GM13977 (cell line): ENCODE measurements at regions of chr3 and their contacts with region 1.

Region 1: DNA sequence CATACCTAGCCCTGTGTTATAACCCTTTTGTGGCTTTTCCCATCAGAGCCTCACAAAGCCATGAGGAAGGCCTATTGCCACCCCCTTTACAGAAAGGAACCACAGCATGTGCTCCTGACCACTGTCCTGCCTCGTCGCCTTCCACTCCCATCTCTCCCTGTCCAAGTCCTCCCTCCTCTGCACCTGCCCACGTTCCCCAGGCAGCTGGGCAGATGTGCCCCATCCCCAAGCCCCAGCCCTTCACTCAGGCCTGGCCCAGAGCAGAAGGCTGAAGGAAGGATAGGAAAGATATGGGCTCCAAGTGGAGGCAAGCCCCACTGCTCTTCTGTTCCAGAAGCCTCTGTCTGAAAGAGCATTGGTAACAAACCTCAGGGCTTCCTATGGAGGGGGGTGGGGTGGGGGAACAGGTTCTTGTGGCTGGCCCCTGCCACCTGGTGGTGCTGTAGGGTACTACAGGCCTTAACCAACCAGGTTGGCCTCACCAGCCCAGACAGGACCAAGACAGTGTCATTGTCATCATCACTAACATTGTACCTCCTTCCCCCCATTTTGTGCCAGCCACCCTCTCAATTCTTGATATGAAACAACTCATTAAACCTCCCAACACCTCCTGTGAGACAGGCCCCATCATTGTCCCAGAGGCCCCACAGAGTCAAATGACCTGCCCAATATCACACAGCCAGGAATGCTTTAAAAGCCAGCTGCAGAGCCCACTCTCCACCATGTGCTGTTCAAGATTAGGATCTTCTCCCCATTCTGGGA is 10.0 kb downstream of the POC1A start:
- DNase-seq: peak; percentile 89
- CTCF ChIP-seq: peak; percentile 91

Region 2: GRCh38 chr3:52001443-52001974 is 142.7 kb before region 1 on chr3:
- in situ Hi-C with region 1: loop called (anchors 5 kb)
- DNase-seq: peak; percentile 92
- CTCF ChIP-seq: peak; percentile 99